Left colon (tissue), 2 donors: ENCODE measurements at regions of chr9 and their contacts with region 1.

Region 1: GRCh38 chr9:97890038-97890437 is 32.3 kb downstream of the TRMO start:
- DNase-seq: peak in 1 of 2 donors; percentile 48
- ATAC-seq: no peak

Region 2: GRCh38 chr9:97710356-97711222 is 179.4 kb before region 1 on chr9:
- intact Hi-C with region 1: loop called in 1 of 2 experiments (anchors 5 kb)
- DNase-seq: peak in 1 of 2 donors; percentile 48
- ATAC-seq: peak; percentile 86